CD4-positive, alpha-beta T cell (primary cell): ENCODE measurements at regions of chr15 and their contacts with region 1.

Region 1: GRCh38 chr15:36117296-36117787 is 462.1 kb upstream of the CDIN1 start:
- DNase-seq: no peak
- ATAC-seq: no peak
- H3K4me3 ChIP-seq: no peak overlapping the region
- H3K4me3 Mint-ChIP-seq: no peak overlapping the region
- H3K27ac ChIP-seq: no peak overlapping the region
- H3K27ac Mint-ChIP-seq: no peak overlapping the region
- H3K4me1 ChIP-seq: no peaks in the 10 kb centered on the region
- H3K4me1 Mint-ChIP-seq: no peaks in the 10 kb centered on the region
- H3K27me3 ChIP-seq: no peaks in the 10 kb centered on the region
- H3K27me3 Mint-ChIP-seq: no peaks in the 10 kb centered on the region
- CTCF ChIP-seq: no peak

Region 2: DNA sequence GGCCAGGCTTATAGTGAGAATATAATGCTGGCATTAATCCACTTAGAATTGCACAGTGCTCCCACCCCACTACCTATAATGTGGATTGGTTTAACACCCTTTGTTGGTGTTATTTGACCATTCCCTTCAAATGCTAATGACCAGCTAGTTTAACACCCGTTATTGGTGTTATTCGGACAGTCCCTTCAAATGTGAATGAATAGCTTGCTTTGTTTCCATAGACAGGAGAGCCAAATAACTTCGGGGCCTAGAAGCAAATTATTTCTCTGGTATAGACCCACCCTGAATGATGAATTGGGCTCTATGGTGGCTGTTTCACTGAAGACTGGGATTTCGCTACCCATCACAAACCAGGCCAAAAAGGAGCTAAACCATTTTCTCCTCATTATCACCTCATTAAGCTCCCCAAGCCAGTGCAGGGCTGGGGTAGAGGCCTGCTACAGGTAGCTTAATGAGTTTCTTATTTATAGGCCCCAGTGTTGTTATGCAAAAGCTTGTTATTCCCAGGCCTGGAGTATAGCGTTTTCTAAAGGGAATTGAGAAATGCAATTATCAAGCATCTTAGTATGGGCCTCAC is 77.3 kb before region 1 on chr15:
- CTCF ChIA-PET with region 1: no interaction called
- POLR2A ChIA-PET with region 1: no interaction called
- intact Hi-C with region 1: no loop called
- DNase-seq: no peak
- ATAC-seq: no peak
- H3K4me3 ChIP-seq: no peak overlapping the region
- H3K4me3 Mint-ChIP-seq: no peak overlapping the region
- H3K27ac ChIP-seq: no peak overlapping the region
- H3K27ac Mint-ChIP-seq: no peak overlapping the region
- H3K4me1 ChIP-seq: no peaks in the 10 kb centered on the region
- H3K4me1 Mint-ChIP-seq: no peaks in the 10 kb centered on the region
- H3K27me3 ChIP-seq: no peaks in the 10 kb centered on the region
- H3K27me3 Mint-ChIP-seq: no peaks in the 10 kb centered on the region
- CTCF ChIP-seq: no peak

Region 3: GRCh38 chr15:36106640-36107335 is 10.6 kb before region 1 on chr15:
- CTCF ChIA-PET with region 1: no interaction called
- POLR2A ChIA-PET with region 1: no interaction called
- intact Hi-C with region 1: no loop called
- DNase-seq: no peak
- ATAC-seq: no peak
- H3K4me3 ChIP-seq: no peak overlapping the region
- H3K4me3 Mint-ChIP-seq: no peak overlapping the region
- H3K27ac ChIP-seq: no peak overlapping the region
- H3K27ac Mint-ChIP-seq: no peak overlapping the region
- H3K4me1 ChIP-seq: no peaks in the 10 kb centered on the region
- H3K4me1 Mint-ChIP-seq: no peaks in the 10 kb centered on the region
- H3K27me3 ChIP-seq: no peaks in the 10 kb centered on the region
- H3K27me3 Mint-ChIP-seq: no peaks in the 10 kb centered on the region
- CTCF ChIP-seq: no peak

Region 4: GRCh38 chr15:36130641-36131310 is 13.4 kb after region 1 on chr15:
- CTCF ChIA-PET with region 1: no interaction called
- POLR2A ChIA-PET with region 1: no interaction called
- intact Hi-C with region 1: loop called in 1 of 2 experiments (anchors 1 kb)
- DNase-seq: no peak
- ATAC-seq: no peak
- H3K4me3 ChIP-seq: no peak overlapping the region
- H3K4me3 Mint-ChIP-seq: no peak overlapping the region
- H3K27ac ChIP-seq: no peak overlapping the region
- H3K27ac Mint-ChIP-seq: no peak overlapping the region
- H3K4me1 ChIP-seq: no peaks in the 10 kb centered on the region
- H3K4me1 Mint-ChIP-seq: no peaks in the 10 kb centered on the region
- H3K27me3 ChIP-seq: no peaks in the 10 kb centered on the region
- H3K27me3 Mint-ChIP-seq: no peaks in the 10 kb centered on the region
- CTCF ChIP-seq: no peak